ENCODE measurements at regions of chr4 and their contacts with region 1.

Region 1: GRCh38 chr4:108172753-108173598 is 4.2 kb upstream of the LEF1 start:
- DNase-seq: peak; percentile 70
- H3K4me3 Mint-ChIP-seq: peak overlapping the region; percentile 91
- H3K27ac Mint-ChIP-seq: peak overlapping the region; percentile 94
- H3K4me1 Mint-ChIP-seq: peaks cover 61% of the 10 kb centered on the region
- H3K27me3 Mint-ChIP-seq: peaks cover 12% of the 10 kb centered on the region

Region 2: DNA sequence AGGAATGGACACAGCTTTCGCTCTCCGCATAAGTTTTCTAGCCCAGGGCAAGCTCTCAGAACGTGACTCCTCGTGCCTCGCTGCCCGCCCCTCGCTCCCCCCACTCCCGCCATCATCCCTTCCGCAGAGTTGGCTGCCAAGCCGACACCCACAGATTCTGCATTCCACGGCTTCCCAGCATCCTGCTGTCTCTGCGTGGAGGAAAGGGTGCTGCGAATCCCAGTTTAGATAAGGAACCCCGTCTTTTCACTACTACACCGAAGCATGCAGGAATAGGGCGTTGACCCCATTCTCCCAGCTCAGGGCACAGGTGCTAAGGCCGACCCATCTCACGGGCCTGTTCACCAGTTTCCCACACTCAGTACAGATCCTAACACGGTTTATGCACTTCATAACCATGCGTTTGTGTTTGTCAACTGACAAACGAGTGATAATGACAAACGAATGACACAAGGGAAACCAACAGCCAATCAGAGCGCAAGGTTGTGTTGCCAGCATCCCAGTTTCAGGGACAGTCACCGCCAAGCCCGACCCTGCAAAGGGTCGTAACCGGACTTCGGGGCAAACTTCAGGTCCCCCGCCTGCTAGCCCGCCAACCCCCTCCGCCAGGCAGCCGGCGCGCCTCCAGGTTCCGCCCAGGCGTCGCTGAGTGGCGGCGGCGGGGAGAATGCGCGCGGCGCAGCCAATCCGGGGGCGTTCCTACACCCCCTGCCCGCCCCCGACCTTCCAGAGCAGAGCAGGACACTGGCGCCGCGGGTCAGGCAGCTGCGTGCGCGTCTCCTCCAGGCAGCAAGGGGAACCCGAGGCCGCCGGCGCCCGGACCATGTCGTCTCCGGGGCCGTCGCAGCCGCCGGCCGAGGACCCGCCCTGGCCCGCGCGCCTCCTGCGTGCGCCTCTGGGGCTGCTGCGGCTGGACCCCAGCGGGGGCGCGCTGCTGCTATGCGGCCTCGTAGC is 241.9 kb before region 1 on chr4 and contains the start of gene CYP2U1:
- intact Hi-C with region 1: loop called (anchors 10 kb)
- DNase-seq: peak; percentile 81
- H3K4me3 Mint-ChIP-seq: peak within 1 kb of the TSS; percentile 86
- H3K27ac Mint-ChIP-seq: peak within 1 kb of the TSS; percentile 82
- H3K4me1 Mint-ChIP-seq: peaks cover 20% of the 10 kb centered on the region
- H3K27me3 Mint-ChIP-seq: peaks cover 2% of the 10 kb centered on the region
- total RNA-seq, gene CYP2U1: 1.1 and 1.5 TPM in 2 replicates

Region 3: GRCh38 chr4:108008721-108009120 is 164.3 kb before region 1 on chr4:
- intact Hi-C with region 1: no loop called
- DNase-seq: no peak
- H3K4me3 Mint-ChIP-seq: no peak overlapping the region
- H3K27ac Mint-ChIP-seq: no peak overlapping the region
- H3K4me1 Mint-ChIP-seq: peaks cover 17% of the 10 kb centered on the region
- H3K27me3 Mint-ChIP-seq: no peaks in the 10 kb centered on the region

Region 4: DNA sequence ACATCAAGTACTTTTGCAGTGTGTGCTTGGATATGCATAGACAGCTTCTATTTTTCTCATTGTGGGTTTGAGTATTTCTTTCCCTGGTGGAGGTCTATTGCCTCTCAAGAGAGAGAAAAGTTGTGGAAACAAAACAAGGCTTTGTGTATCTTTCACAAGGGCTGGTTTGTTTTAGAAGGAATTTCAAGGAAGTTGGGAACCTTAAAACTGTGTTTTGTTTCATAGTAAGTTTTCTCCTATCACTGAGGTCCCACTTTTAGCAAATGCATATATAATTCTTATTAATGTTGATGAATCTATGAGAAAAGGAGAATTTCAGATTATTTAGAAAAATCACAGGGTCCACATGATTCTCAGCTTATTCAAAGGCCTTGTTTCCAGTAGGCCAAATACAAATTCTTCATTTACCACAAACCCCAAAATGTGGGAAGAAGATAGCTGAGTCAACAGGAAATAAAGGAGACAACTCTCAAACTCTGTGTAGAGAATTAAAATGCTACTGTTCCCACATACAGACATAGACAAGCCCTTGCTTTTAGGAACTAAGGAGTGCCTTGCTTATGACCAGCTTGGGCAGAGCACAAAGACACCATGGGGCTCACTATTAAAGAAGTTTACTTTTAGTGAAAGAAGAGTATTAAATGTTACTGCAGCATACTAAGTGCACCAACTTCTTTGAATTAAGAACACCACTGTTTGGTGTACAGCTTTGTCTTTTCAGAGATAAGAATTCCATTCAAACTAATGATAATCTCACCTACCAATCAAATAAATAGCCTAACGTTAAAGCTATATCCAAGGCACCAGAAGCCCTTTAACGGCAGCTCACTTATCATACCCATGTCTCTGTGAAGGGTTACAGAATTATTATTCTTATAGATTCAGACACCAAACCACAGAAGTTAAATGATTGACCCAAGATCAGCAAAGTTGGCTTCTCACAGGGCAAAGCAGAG is 173.2 kb after region 1 on chr4:
- intact Hi-C with region 1: loop called (anchors 5 kb)
- DNase-seq: no peak
- H3K4me3 Mint-ChIP-seq: peak overlapping the region; percentile 28
- H3K27ac Mint-ChIP-seq: no peak overlapping the region
- H3K4me1 Mint-ChIP-seq: peaks cover 44% of the 10 kb centered on the region
- H3K27me3 Mint-ChIP-seq: no peaks in the 10 kb centered on the region

Region 5: GRCh38 chr4:108483079-108483478 is 310.1 kb after region 1 on chr4:
- intact Hi-C with region 1: loop called (anchors 5 kb)
- DNase-seq: no peak
- H3K4me3 Mint-ChIP-seq: peak overlapping the region; percentile 46
- H3K27ac Mint-ChIP-seq: peak overlapping the region; percentile 37
- H3K4me1 Mint-ChIP-seq: peaks cover 56% of the 10 kb centered on the region
- H3K27me3 Mint-ChIP-seq: no peaks in the 10 kb centered on the region

Region 6: GRCh38 chr4:108533245-108533844 is 360.4 kb after region 1 on chr4:
- intact Hi-C with region 1: loop called (anchors 5 kb)
- DNase-seq: no peak
- H3K4me3 Mint-ChIP-seq: peak overlapping the region; percentile 41
- H3K27ac Mint-ChIP-seq: peak overlapping the region; percentile 40
- H3K4me1 Mint-ChIP-seq: peaks cover 84% of the 10 kb centered on the region
- H3K27me3 Mint-ChIP-seq: no peaks in the 10 kb centered on the region

Region 7: DNA sequence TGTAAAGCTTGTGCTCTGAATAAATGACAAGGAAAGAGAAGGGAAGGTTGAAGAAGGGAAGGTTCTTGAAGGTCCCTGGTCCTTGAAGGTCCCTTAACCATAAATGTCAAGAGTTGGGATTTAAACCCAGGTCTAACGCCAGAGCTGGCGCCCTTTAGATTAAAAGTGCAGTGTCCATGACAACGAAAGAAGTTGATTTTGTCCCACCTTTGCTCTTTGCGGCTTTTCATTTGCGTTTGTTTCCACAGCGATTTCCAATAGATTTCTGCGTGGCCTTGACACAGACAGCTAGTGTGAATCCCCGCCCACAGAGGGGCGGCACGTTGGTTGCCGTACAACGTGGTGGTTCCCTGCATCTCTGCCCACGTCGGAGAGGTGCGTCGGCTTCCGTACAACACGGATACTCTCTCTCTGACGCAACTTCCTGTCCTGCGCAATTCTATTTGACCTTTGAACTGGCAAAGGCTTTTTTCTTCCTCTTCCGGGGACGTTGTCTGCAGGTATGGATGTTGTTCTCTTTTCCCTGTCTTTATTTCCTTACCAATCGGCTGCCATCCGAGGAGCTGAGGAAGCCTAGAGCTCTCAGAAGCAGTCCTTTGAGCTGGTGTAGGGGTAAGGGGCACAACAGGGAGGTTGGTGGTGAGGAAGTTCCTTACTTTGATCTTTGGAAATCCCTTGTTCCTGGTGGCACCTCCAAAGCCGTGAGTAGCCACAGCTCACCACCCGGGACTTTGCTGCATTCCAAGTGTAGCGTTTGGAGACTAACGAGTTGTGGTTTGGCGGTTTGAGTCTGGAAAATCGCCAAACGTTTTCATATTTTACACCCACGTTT is 447.3 kb after region 1 on chr4 and contains the start of gene RPL34:
- intact Hi-C with region 1: loop called (anchors 1 kb)
- DNase-seq: peak; percentile 96
- H3K4me3 Mint-ChIP-seq: peak within 1 kb of the TSS; percentile 98
- H3K27ac Mint-ChIP-seq: peak within 1 kb of the TSS; percentile 97
- H3K4me1 Mint-ChIP-seq: peaks cover 43% of the 10 kb centered on the region
- H3K27me3 Mint-ChIP-seq: no peaks in the 10 kb centered on the region
- total RNA-seq, gene RPL34: 1,258 and 1,304 TPM in 2 replicates